Mammary epithelial cell (primary cell): ENCODE measurements at regions of chr22 and their contacts with region 1.

Region 1: GRCh38 chr22:30336752-30337460 is 10.2 kb upstream of the TBC1D10A start:
- DNase-seq: no peak
- H3K4me3 ChIP-seq: no peak overlapping the region
- H3K27ac ChIP-seq: no peak overlapping the region
- H3K4me1 ChIP-seq: no peaks in the 10 kb centered on the region
- H3K27me3 ChIP-seq: no peaks in the 10 kb centered on the region
- CTCF ChIP-seq: no peak

Region 2: GRCh38 chr22:30282616-30283081 is 54.3 kb before region 1 on chr22:
- CTCF ChIA-PET with region 1: interaction called, 3 read pairs
- dilution Hi-C with region 1: loop called (anchors 5 kb)
- in situ Hi-C with region 1: loop called in 1 of 2 experiments (anchors 10 kb)
- intact Hi-C with region 1: no loop called
- DNase-seq: no peak
- H3K4me3 ChIP-seq: no peak overlapping the region
- H3K27ac ChIP-seq: no peak overlapping the region
- H3K4me1 ChIP-seq: peaks cover 18% of the 10 kb centered on the region
- H3K27me3 ChIP-seq: no peaks in the 10 kb centered on the region
- CTCF ChIP-seq: no peak

Region 3: GRCh38 chr22:30381264-30381663 is 44.4 kb after region 1 on chr22:
- CTCF ChIA-PET with region 1: no interaction called
- dilution Hi-C with region 1: loop called (anchors 5 kb)
- in situ Hi-C with region 1: no loop called
- intact Hi-C with region 1: no loop called
- DNase-seq: no peak
- H3K4me3 ChIP-seq: no peak overlapping the region
- H3K27ac ChIP-seq: no peak overlapping the region
- H3K4me1 ChIP-seq: peaks cover 3% of the 10 kb centered on the region
- H3K27me3 ChIP-seq: no peaks in the 10 kb centered on the region
- CTCF ChIP-seq: no peak